Sigmoid colon (tissue), 7 donors: ENCODE measurements at regions of chr9 and their contacts with region 1.

Region 1: DNA sequence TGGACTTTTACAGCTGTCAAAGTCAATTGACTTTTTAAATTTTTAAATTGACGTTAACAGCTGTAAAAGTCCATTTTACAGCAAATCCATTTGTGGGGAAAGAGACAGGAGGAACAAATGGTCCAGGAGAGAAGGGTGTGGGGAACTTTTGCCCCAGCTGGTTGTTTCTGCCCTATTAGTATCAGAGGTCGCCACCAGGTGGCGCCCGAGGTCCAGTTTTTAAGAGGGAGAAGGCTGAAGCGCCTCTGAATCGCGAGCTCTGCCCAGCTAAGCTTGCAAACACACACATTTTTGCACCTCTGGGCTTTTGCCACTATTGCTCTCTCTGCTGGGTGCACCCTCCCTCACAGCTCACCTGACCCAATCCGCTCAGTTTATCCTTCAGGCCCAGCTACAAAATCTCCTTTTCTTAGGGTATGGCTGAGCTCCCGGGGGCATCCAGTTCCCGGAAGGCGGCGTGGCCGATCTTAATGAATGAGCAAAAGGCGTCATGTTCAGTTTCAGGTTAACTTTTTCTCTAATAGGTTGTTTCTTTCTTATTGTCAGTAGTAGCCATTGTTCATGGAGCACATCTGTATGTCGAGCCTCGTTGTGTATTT is 6.3 kb upstream of the TTLL11 start:
- DNase-seq: peak; percentile 92
- H3K4me3 ChIP-seq: no peak overlapping the region
- H3K27ac ChIP-seq: no peak overlapping the region
- H3K4me1 ChIP-seq: peaks cover 0 to 4% (median 4%) of the 10 kb centered on the region in 4 donors
- H3K27me3 ChIP-seq: no peaks in the 10 kb centered on the region
- CTCF ChIP-seq: peak; percentile 47 to 88 (median 78)
- EP300 ChIP-seq: no peak
- POLR2A ChIP-seq: no peak

Region 2: GRCh38 chr9:121692606-121693387 is 406.6 kb before region 1 on chr9:
- intact Hi-C with region 1: no loop called
- DNase-seq: no peak
- H3K4me3 ChIP-seq: no peak overlapping the region
- H3K27ac ChIP-seq: peak overlapping the region; percentile 59 to 78 (median 71)
- H3K4me1 ChIP-seq: peaks cover 0 to 48% (median 41%) of the 10 kb centered on the region in 4 donors
- H3K27me3 ChIP-seq: no peaks in the 10 kb centered on the region
- CTCF ChIP-seq: no peak
- EP300 ChIP-seq: no peak
- POLR2A ChIP-seq: no peak

Region 3: DNA sequence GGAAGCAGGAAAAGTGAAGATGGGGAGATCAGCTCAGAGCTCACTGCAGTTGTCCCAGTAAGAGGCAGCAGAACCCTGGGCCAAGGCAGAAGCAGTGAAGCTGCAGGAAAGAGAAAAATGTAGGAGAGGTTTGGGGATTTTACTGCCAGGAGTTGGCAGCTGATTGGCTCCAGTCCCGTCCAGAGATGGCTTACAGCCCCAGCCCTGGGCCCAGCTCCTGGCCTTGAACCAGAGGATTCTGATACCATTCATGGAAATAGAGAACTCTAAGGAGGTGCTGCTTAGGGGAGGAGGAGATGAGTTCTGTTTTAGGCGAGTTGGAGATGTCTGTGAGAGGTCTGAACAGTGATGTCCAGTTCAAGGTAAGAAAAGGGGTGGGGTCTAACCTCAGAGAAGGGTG is 64.9 kb after region 1 on chr9:
- intact Hi-C with region 1: loop called (anchors 5 kb)
- DNase-seq: peak; percentile 90
- H3K4me3 ChIP-seq: peak overlapping the region in 3 of 4 donors; percentile 3 to 32 (median 10)
- H3K27ac ChIP-seq: peak overlapping the region; percentile 9 to 77 (median 66)
- H3K4me1 ChIP-seq: peaks cover 0 to 34% (median 17%) of the 10 kb centered on the region in 4 donors
- H3K27me3 ChIP-seq: no peaks in the 10 kb centered on the region
- CTCF ChIP-seq: no peak
- EP300 ChIP-seq: peak in 1 of 4 donors; percentile 21
- POLR2A ChIP-seq: no peak

Region 4: DNA sequence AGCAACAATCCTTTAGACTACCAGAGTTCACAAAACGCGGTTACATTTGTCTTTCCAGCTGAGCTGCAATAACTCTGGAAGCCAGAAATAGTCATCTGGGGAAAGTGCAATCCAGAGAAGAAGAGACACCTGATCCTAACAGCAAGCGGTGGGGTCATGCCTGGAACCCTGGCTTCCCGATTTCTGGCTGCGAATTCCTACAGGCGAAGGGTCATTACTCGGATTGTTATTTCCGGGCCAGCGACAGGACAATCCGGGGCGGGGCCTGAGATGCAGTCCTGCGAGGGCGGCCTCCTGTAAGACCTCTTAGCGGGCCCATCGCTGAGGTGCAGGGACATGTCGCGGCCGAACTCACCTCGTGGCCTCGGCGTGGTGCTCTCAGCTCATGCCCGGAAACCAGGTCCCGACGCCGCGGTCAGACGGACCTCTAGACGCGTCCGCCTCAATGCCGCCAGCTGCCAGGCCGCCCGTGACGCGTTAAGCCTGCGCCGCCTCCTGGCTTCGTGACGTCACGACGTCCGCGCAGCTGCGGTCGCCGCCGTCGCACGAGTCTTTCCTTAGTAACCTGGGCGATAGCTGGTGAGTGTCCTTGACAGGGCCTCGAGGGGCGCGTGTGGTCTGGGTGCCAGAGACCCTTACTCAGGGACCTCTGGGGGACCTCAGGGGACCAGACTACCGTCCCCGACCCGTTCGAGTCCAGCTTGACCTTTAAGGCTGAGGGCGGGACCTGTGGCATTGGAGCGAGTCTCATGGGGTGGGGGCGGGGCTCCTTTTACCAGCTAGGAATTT is 165.2 kb after region 1 on chr9 and contains the starts of genes MRRF and RBM18:
- intact Hi-C with region 1: no loop called
- DNase-seq: peak; percentile 95
- H3K4me3 ChIP-seq: peak within 1 kb of the TSS; percentile 56 to 84 (median 70)
- H3K27ac ChIP-seq: peak within 1 kb of the TSS; percentile 86 to 93 (median 92)
- H3K4me1 ChIP-seq: peaks cover 0 to 42% (median 39%) of the 10 kb centered on the region in 4 donors
- H3K27me3 ChIP-seq: no peaks in the 10 kb centered on the region
- CTCF ChIP-seq: no peak
- EP300 ChIP-seq: peak in 1 of 4 donors; percentile 16
- POLR2A ChIP-seq: peak in 1 of 2 donors; percentile 63
- total RNA-seq, gene MRRF: 29.9 to 40.7 (median 33.9) TPM
- total RNA-seq, gene RBM18: 11.9 to 16.8 (median 13.0) TPM